Keratinocyte (primary cell): ENCODE measurements at regions of chr20 and their contacts with region 1.

Region 1: DNA sequence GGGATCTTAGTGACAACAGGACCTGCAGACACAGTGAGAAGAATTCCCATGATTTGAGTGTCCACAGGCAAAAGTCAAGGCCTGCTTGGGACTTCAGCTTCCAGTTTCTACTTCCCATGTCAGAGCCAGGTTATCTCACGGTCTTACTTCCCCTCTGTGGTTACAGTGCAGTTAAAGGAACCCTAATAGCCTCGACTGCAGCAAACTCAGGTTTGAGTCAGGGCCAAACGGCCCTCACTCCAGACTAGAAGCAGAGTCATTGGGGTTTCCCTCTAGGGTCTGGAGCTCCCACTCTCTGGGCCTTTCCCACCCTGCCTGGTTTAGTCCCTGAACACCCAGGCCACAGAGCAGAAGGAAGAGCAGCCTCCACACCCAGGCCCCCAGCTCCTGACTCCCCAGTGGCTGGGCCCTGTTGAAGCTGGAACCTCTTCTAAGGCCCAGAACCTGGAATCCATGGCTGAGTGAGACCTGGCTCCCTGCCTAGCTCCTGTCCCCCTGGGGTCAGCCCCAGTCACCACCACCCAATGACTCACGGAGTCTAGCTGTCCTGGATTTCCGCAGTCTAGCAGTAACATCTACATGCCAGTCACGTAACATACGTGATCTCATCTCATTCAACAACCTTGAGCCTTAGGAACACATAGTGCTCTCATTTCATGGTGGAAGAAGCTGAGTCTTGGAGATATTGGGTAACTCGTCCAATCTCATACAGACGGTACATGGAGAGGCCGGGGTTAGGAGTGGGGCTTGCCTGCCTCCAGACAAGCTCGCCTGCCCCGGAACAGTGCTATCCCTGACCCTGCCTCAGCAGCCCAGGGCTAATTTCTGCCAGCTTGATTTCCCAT is 9.2 kb upstream of the GHRH start:
- DNase-seq: no peak
- H3K4me3 ChIP-seq: no peak overlapping the region
- H3K27ac ChIP-seq: no peak overlapping the region
- H3K4me1 ChIP-seq: peaks cover 3% of the 10 kb centered on the region
- H3K27me3 ChIP-seq: no peaks in the 10 kb centered on the region
- CTCF ChIP-seq: no peak

Region 2: DNA sequence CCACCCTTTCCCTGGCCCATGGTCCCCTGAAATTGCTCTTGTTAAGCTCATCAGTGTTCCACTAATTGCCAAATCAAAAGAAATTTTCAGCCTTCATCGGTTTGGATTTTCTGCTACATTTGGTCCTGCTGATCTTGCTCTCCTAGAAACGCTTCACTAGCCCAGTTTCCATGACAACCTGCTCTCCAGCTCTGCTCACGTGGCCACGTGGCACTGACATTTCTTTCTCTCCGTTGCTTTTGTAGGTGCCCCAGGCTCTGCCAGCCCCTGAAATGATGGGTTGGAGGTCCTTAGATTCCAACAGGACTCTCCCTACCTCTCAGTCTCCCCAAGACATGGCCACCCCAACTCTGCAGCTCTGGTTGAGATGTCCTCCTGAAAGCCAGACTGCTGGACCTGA is 204.5 kb after region 1 on chr20:
- dilution Hi-C with region 1: loop called (anchors 25 kb)
- DNase-seq: no peak
- H3K4me3 ChIP-seq: no peak overlapping the region
- H3K27ac ChIP-seq: no peak overlapping the region
- H3K4me1 ChIP-seq: no peaks in the 10 kb centered on the region
- H3K27me3 ChIP-seq: peaks cover 18% of the 10 kb centered on the region
- CTCF ChIP-seq: no peak